ENCODE measurements at regions of chr7 and their contacts with region 1.

Region 1: GRCh38 chr7:127359011-127359410 is 33.5 kb downstream of the ZNF800 start:
- DNase-seq: no peak
- ATAC-seq: no peak
- H3K4me3 ChIP-seq: no peak overlapping the region
- H3K27ac ChIP-seq: no peak overlapping the region
- H3K4me1 ChIP-seq: no peaks in the 10 kb centered on the region
- CTCF ChIP-seq: no peak
- EP300 ChIP-seq: no peak
- POLR2A ChIP-seq: no peak
- RAD21 ChIP-seq: no peak

Region 2: DNA sequence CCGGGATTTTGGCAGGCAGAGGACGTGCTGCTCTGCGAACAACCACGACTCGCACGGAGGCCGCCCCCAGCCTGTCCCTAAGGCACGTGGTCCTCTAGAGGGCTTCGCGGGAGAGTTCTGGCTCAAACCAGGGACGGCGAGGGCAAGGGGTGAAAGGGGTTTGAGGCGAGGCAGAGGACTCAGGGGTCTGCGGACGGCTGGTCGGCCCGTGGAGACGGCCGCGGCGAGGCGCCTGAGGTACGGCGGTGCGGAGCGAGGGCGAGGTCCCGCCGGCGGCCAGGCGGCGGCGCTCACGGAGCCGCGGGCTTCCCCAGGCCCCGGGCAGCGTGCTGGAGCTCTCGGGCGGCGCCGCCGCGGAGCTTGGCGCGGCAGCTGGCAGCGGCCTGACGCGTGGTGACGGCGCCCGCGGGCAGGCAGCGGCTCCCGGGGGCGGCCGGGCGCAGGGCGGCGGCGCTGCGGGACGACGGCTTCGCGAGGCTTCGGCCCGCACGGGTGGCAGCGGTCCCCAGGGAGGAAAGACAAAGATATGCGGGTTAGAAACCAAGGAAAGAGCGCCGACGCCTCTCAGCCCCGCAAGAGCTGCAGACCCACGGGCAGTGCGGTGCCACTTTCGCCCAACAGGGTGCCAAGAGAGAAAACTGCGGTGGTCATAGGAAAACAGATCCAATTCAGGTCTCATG is 11.3 kb before region 1 on chr7:
- CTCF ChIA-PET with region 1: interaction called, 11 read pairs
- POLR2A ChIA-PET with region 1: no interaction called
- DNase-seq: peak; percentile 69 to 71
- ATAC-seq: peak; percentile 99
- H3K4me3 ChIP-seq: peak overlapping the region; percentile 47
- H3K27ac ChIP-seq: peak overlapping the region; percentile 61 to 77
- H3K4me1 ChIP-seq: no peaks in the 10 kb centered on the region
- CTCF ChIP-seq: peak; percentile 78
- EP300 ChIP-seq: no peak
- POLR2A ChIP-seq: no peak
- RAD21 ChIP-seq: peak; percentile 8 to 55; a peak in 4 of 5 replicates

Region 3: DNA sequence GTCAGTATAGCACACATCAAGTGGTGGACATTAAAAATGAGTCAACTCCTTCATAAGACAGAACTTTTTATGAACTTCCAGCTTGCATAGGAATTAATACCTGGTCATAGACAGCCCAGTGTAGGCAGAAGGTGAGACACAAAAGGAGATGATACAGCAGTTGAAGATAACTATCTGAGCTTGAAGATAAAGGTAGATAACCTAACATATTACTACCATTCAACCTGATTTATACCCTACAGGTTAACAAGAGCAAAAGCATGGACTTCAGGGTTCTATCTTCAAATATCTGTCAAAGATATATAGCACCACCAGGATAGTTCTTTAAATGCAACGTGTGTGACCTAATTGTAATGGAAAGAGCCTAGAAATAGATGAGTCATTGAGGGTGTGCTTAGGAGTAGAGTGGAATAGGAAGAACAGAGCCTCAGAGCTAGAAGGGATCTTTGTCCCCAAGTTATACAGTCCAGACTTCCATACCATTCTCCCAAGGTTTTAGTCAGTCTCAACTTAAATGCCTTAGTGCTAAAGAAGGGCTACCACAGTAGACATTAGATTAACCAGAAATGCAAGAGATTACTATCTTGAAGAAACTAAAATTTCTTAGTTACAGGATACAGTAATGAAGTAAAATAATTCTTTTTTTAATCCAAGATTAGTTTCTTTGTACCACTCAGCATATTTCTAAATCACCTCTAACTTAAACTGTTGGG is 24.3 kb after region 1 on chr7:
- CTCF ChIA-PET with region 1: no interaction called
- POLR2A ChIA-PET with region 1: no interaction called
- DNase-seq: peak in 1 of 2 experiments; percentile 45
- ATAC-seq: peak; percentile 81 to 83
- H3K4me3 ChIP-seq: no peak overlapping the region
- H3K27ac ChIP-seq: no peak overlapping the region
- H3K4me1 ChIP-seq: peaks cover 13% of the 10 kb centered on the region
- CTCF ChIP-seq: no peak
- EP300 ChIP-seq: no peak
- POLR2A ChIP-seq: no peak
- RAD21 ChIP-seq: no peak

Measured in A549 (cell line).